Transverse colon (tissue), 4 donors: ENCODE measurements at regions of chr20 and their contacts with region 1.

Region 1: GRCh38 chr20:56143759-56144158 is 104.8 kb upstream of the MC3R start:
- DNase-seq: no peak
- H3K4me3 ChIP-seq: no peak overlapping the region
- H3K27ac ChIP-seq: no peak overlapping the region
- H3K4me1 ChIP-seq: no peaks in the 10 kb centered on the region
- H3K27me3 ChIP-seq: no peaks in the 10 kb centered on the region
- CTCF ChIP-seq: no peak
- EP300 ChIP-seq: no peak
- POLR2A ChIP-seq: no peak

Region 2: GRCh38 chr20:56032251-56032650 is 111.5 kb before region 1 on chr20:
- in situ Hi-C with region 1: loop called in 1 of 4 experiments (anchors 25 kb)
- intact Hi-C with region 1: no loop called
- DNase-seq: no peak
- H3K4me3 ChIP-seq: no peak overlapping the region
- H3K27ac ChIP-seq: no peak overlapping the region
- H3K4me1 ChIP-seq: no peaks in the 10 kb centered on the region
- H3K27me3 ChIP-seq: no peaks in the 10 kb centered on the region
- CTCF ChIP-seq: no peak
- EP300 ChIP-seq: no peak
- POLR2A ChIP-seq: no peak

Region 3: DNA sequence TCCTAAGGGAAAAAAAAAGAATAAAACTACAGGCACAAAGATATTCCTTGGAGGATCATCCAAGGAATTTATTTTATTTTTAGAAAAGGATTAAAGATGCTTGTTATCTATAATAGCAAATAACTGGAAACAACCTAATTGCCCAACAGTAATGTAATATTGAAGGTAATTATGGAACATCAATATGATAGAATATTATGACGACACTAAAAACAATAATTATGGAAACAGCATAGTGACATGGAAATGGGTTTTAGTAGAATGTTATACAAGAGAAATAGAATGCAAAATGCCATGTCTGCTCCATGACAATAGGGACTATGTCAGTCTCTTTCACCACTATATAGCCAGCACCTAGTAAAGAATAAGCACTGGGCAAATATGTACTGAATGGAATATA is 86.6 kb before region 1 on chr20:
- in situ Hi-C with region 1: no loop called
- intact Hi-C with region 1: no loop called
- DNase-seq: no peak
- H3K4me3 ChIP-seq: no peak overlapping the region
- H3K27ac ChIP-seq: no peak overlapping the region
- H3K4me1 ChIP-seq: no peaks in the 10 kb centered on the region
- H3K27me3 ChIP-seq: no peaks in the 10 kb centered on the region
- CTCF ChIP-seq: no peak
- EP300 ChIP-seq: no peak
- POLR2A ChIP-seq: no peak